Caco-2 (cell line): ENCODE measurements at regions of chrX and their contacts with region 1.

Region 1: GRCh38 chrX:41090568-41091238 is 5.5 kb downstream of the USP9X start:
- DNase-seq: peak in 1 of 2 experiments; percentile 23
- H3K4me3 ChIP-seq: no peak overlapping the region
- H3K4me3 Mint-ChIP-seq: peak overlapping the region; percentile 40
- H3K27ac Mint-ChIP-seq: peak overlapping the region; percentile 57
- H3K4me1 ChIP-seq: peaks cover 27% of the 10 kb centered on the region
- H3K4me1 Mint-ChIP-seq: peaks cover 7% of the 10 kb centered on the region
- H3K27me3 ChIP-seq: no peaks in the 10 kb centered on the region
- H3K27me3 Mint-ChIP-seq: no peaks in the 10 kb centered on the region
- CTCF ChIP-seq: no peak

Region 2: GRCh38 chrX:41076738-41077137 is 14.0 kb before region 1 on chrX:
- CTCF ChIA-PET with region 1: no interaction called
- POLR2A ChIA-PET with region 1: no interaction called
- intact Hi-C with region 1: no loop called
- DNase-seq: no peak
- H3K4me3 ChIP-seq: no peak overlapping the region
- H3K4me3 Mint-ChIP-seq: no peak overlapping the region
- H3K27ac Mint-ChIP-seq: no peak overlapping the region
- H3K4me1 ChIP-seq: no peaks in the 10 kb centered on the region
- H3K4me1 Mint-ChIP-seq: no peaks in the 10 kb centered on the region
- H3K27me3 ChIP-seq: no peaks in the 10 kb centered on the region
- H3K27me3 Mint-ChIP-seq: no peaks in the 10 kb centered on the region
- CTCF ChIP-seq: no peak

Region 3: DNA sequence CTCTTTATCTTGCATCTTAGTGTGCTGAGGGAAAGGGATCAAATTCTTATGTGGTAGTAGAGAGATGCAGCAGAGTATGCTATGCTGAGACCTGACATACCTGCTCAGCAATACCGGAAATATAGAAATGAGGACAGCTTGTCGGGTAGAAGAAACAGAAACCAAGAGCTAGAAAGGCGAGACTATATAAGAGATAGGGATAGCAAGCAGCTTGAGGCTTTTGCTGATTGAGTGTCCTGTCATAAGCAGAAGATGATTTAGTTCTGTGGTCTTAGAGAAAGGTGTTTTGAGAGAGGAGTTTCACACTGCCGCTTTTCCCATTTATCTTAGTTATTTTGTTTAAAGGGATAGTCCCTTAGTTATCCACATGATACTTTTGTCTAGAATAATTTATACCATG is 26.2 kb after region 1 on chrX:
- CTCF ChIA-PET with region 1: interaction called, 12 read pairs
- POLR2A ChIA-PET with region 1: no interaction called
- intact Hi-C with region 1: no loop called
- DNase-seq: no peak
- H3K4me3 ChIP-seq: no peak overlapping the region
- H3K4me3 Mint-ChIP-seq: no peak overlapping the region
- H3K27ac Mint-ChIP-seq: no peak overlapping the region
- H3K4me1 ChIP-seq: no peaks in the 10 kb centered on the region
- H3K4me1 Mint-ChIP-seq: peaks cover 7% of the 10 kb centered on the region
- H3K27me3 ChIP-seq: no peaks in the 10 kb centered on the region
- H3K27me3 Mint-ChIP-seq: no peaks in the 10 kb centered on the region
- CTCF ChIP-seq: no peak